ENCODE measurements at regions of chr22 and their contacts with region 1.

Region 1: DNA sequence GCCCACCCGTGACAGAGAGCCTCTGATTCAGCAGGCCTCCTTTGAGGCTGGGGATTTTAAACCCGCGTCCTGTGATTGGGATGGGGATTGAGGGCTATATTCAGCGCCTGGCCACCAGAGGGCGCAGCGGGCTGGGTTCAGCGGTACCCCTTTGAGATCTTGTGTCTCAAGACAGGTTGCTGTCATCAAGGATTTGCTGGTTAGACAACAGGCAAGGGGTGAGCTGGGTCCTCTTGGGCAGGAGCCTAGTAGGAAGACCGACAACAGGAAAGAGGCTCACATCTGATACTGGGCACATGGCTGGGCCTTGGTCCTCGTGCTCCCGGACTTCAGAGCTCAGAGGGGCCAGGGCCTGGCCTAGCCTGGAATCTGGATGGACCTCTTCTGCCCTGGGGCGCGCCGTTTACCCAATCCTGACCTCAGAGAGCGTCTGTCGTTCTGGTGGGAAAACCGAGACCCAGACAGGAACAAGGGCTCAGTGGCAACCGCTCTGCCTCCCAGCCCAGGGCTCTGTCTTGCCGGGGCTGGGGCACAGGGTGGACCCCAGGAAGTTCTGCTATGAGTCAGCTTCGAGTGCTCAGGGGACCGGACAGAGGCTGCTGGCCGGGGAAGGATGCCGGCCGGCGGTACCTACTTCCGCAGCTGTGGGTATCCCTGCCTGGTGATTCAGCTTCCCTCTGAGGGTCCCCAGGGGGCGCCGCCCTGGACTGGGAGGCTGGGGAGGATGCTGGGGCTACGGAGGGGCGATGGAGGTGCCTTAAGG is 929 bp upstream of the SLC35E4 start:
- DNase-seq: peak; percentile 87
- ATAC-seq: peak; percentile 62
- H3K4me3 ChIP-seq: peak overlapping the region; percentile 65
- H3K27ac ChIP-seq: peak overlapping the region; percentile 68
- H3K4me1 ChIP-seq: peaks cover 23% of the 10 kb centered on the region
- H3K27me3 ChIP-seq: no peaks in the 10 kb centered on the region
- CTCF ChIP-seq: peak; percentile 89

Region 2: DNA sequence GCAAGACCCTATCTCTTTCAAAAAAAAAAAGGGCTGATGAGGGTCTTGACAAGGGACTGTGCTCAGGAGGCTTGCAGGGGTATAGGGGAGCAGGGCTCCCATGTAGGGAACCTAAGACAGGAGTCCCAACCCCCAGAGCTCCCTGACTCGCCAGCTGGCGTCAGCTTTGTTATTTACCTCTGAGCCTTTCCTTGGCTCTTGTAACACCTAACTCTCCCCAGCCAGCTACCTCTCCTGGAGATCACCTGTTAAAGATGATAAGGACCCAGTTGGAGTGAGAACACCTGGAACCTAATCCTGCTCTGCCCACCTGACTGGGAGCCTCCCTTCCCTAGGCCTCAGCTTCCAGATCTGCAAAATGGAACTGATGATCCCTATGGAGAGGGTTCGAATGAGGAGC is 14.2 kb after region 1 on chr22:
- CTCF ChIA-PET with region 1: interaction called, 6 read pairs
- POLR2A ChIA-PET with region 1: interaction called, 17 read pairs
- intact Hi-C with region 1: no loop called
- DNase-seq: no peak
- ATAC-seq: no peak
- H3K4me3 ChIP-seq: no peak overlapping the region
- H3K27ac ChIP-seq: peak overlapping the region; percentile 69
- H3K4me1 ChIP-seq: peaks cover 19% of the 10 kb centered on the region
- H3K27me3 ChIP-seq: no peaks in the 10 kb centered on the region
- CTCF ChIP-seq: no peak

Region 3: DNA sequence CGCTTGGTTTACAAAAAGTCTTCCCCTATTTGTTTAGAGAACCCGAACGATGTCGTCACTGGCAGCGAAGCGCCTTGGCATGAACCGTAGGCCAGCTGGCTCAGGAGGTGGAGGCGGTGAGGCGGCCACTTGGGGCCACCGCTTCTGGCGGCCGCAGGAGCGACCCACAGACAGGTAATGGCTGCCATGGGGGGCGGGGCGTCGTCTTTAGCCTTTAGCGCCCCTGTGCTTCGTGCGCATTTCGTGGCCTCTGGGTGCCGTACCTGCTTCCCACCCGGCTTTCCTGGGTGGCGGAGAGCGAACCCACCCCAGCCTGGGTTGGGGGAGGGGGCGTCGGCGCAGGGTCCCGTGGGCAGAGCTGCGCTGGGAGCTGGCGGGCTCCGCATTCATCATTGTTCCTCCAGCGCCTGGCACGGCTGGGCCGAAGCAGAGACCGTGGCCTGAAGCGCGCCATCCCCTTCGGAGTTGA is 59.6 kb after region 1 on chr22:
- CTCF ChIA-PET with region 1: no interaction called
- POLR2A ChIA-PET with region 1: no interaction called
- intact Hi-C with region 1: loop called (anchors 2 kb)
- DNase-seq: peak; percentile 44
- ATAC-seq: peak; percentile 61
- H3K4me3 ChIP-seq: peak overlapping the region; percentile 74
- H3K27ac ChIP-seq: 0 out of 2 replicates have a peak overlapping the region, but pooled peaks have one; percentile 8
- H3K4me1 ChIP-seq: peaks cover 9% of the 10 kb centered on the region; the same call in 1 of the 2 replicates
- H3K27me3 ChIP-seq: no peaks in the 10 kb centered on the region
- CTCF ChIP-seq: no peak

Region 4: DNA sequence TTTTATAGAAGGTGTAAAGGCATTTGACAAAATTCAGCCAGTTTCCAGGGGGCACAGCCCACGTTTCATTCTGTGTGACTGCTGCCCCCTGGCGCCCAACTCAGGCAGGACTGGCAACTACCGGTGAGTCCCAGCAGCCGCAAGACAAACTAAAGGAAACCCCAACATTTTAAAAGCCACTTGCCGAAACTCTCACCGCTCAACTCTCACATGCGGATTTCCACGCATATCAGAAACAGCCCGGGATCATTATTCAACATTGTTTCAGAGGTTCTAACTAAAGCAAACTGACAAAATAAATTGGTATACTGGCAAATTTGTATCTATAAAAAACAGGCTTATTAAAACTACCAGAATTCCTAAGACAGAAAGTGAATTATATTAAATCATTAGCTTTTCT is 285.8 kb after region 1 on chr22:
- CTCF ChIA-PET with region 1: no interaction called
- POLR2A ChIA-PET with region 1: no interaction called
- intact Hi-C with region 1: loop called (anchors 1 kb)
- DNase-seq: peak; percentile 70
- ATAC-seq: peak; percentile 70
- H3K4me3 ChIP-seq: no peak overlapping the region
- H3K27ac ChIP-seq: no peak overlapping the region
- H3K4me1 ChIP-seq: no peaks in the 10 kb centered on the region
- H3K27me3 ChIP-seq: no peaks in the 10 kb centered on the region
- CTCF ChIP-seq: peak; percentile 82

Region 5: DNA sequence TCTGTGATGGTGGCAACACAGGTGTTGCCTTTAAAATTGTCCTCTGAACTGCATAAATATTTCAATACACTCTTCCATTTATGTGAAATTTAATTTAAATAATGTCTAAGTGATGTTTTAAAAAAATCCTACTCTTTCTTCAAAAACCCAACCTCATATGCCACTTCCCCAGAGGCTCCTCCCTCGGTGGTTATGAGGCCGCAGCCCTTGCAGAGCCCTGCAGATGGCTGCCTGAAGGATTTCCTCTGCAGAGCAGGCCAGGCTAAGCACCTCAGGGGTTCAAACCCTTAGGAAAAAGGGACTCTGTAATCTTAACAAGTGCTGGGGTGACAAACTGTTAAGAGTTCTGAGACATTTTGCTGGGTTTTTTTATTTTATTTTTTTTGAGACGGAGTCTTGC is 308.7 kb after region 1 on chr22:
- CTCF ChIA-PET with region 1: no interaction called
- POLR2A ChIA-PET with region 1: no interaction called
- intact Hi-C with region 1: no loop called
- DNase-seq: no peak
- ATAC-seq: no peak
- H3K4me3 ChIP-seq: no peak overlapping the region
- H3K27ac ChIP-seq: no peak overlapping the region
- H3K4me1 ChIP-seq: no peaks in the 10 kb centered on the region
- H3K27me3 ChIP-seq: no peaks in the 10 kb centered on the region
- CTCF ChIP-seq: no peak

Measured in PC-3 (cell line).